ENCODE measurements at regions of chr7 and their contacts with region 1.

Region 1: GRCh38 chr7:50610521-50611277 is 45.5 kb upstream of the DDC start:
- DNase-seq: no peak
- ATAC-seq: no peak
- H3K4me3 ChIP-seq: no peak overlapping the region
- H3K27ac ChIP-seq: no peak overlapping the region
- H3K4me1 ChIP-seq: peaks cover 0 to 19% (median 0%) of the 10 kb centered on the region in 9 donors
- H3K27me3 ChIP-seq: no peaks in the 10 kb centered on the region
- CTCF ChIP-seq: no peak

Region 2: DNA sequence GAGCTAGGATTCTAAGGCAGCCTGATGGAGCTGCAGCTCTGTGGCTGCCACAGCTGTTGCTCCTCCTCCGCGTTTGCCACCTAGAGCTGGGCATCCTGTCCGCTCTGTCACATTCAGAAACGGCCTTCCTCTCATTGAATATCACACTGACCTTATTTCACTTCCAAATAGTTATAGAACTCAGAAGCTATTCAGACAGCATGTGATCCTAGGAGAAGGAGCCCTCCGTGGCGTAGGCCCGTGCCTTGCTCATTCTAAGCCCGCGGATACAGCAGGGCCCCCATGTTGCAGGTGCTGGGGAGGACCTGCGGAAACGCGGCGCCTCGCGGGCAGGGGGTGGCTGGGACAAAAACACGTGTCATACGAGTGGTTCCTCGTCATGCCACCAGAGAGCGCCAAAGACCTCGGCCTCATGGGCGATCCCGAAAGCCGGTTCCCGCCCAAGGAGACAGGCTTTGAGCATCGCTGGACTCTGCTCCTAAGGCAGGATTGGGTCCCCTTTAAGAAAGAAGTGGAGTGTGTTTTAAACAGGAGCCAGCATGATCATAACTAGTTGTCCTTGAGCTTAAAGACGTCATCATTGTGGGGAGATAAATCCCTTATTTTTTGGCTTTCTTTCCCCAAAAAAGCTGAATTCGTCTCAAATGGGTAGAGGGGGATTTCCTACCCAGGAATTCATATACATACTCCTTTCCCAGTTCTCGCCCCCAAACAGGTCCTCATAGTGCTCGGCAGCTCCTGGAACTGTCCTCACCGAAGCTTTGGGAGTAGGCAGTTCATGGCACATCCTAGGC is 142.7 kb before region 1 on chr7:
- intact Hi-C with region 1: loop called in 3 of 10 experiments (anchors 10 kb)
- DNase-seq: peak; percentile 80 to 83
- ATAC-seq: peak; percentile 77 to 95 (median 93)
- H3K4me3 ChIP-seq: peak overlapping the region in 2 of 10 donors; percentile 20 to 21
- H3K27ac ChIP-seq: no peak overlapping the region
- H3K4me1 ChIP-seq: peaks cover 0 to 10% (median 0%) of the 10 kb centered on the region in 9 donors
- H3K27me3 ChIP-seq: peaks cover 0 to 7% (median 0%) of the 10 kb centered on the region in 7 donors
- CTCF ChIP-seq: peak; percentile 88 to 95 (median 91)

Region 3: DNA sequence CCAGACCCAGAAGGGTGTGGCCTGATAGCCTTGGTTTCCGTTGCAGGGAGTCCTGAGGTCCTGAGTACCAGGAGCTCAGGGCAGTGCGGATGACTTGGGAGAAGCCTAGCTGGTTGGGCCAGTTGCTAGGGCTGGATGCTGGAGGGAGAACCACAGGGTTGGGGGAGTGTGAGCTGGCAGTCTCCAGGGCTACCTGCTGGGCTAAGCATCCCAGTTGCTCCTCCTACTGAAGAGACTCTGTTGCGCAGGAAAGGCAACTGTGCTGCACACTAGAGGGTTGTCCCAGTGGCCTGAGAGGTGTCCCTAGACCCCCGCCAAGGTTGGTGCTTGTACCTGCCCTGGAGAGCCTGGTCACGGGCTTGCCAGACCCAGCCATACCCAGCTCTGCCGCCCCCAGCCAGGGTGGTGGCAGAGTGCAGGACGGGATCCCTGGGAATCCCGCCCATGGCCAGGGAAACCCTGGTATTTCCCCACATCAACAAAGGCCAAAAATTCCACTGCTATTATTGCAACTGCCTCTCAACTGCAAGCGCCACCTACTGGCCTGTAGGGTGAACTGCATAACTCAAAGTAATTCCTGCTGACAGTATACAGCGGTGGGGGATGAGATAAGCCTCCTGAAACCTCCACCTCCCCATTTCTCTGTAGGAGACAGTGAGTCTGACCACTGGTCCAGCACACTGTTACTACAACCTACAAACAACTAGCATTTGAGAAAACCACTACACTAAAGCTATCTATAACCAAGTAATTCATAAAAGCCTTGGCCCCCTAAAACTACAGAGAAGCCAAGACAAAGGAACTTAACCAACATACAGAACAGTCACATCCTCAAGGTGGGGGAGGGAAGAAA is 22.1 kb after region 1 on chr7:
- intact Hi-C with region 1: no loop called
- DNase-seq: no peak
- ATAC-seq: peak in 3 of 8 donors; percentile 11 to 46 (median 34)
- H3K4me3 ChIP-seq: no peak overlapping the region
- H3K27ac ChIP-seq: peak overlapping the region in 2 of 10 donors; percentile 69 to 76
- H3K4me1 ChIP-seq: peaks cover 9 to 54% (median 39%) of the 10 kb centered on the region in 9 donors
- H3K27me3 ChIP-seq: no peaks in the 10 kb centered on the region
- CTCF ChIP-seq: peak; percentile 53 to 83 (median 63)

Region 4: DNA sequence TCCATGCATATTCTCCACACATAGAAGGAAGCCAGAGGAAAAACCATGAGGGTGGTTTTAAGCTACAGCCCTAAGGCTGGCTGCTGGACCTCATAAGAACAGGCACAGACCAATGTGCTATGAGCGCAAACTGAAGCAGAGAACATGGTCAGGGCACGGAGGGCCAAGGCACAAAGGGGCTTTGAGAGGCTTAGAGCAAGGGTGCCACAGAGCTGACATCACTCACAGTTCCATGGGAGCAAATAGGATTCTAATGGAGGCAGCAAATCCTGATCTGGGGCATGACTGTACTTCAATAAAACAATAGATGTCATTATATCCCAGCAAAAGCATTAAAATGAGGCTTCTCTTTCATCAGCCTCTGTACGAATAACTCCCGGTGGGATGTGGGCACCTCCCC is 543.5 kb after region 1 on chr7:
- intact Hi-C with region 1: loop called in 3 of 10 experiments (anchors 10 kb)
- DNase-seq: no peak
- ATAC-seq: peak in 1 of 8 donors; percentile 23
- H3K4me3 ChIP-seq: no peak overlapping the region
- H3K27ac ChIP-seq: no peak overlapping the region
- H3K4me1 ChIP-seq: peaks cover 0 to 15% (median 0%) of the 10 kb centered on the region in 9 donors
- H3K27me3 ChIP-seq: peaks cover 0 to 5% (median 0%) of the 10 kb centered on the region in 7 donors
- CTCF ChIP-seq: no peak

Measured in heart right ventricle (tissue), 16 donors.